ENCODE measurements at regions of chr6 and their contacts with region 1.

Region 1: DNA sequence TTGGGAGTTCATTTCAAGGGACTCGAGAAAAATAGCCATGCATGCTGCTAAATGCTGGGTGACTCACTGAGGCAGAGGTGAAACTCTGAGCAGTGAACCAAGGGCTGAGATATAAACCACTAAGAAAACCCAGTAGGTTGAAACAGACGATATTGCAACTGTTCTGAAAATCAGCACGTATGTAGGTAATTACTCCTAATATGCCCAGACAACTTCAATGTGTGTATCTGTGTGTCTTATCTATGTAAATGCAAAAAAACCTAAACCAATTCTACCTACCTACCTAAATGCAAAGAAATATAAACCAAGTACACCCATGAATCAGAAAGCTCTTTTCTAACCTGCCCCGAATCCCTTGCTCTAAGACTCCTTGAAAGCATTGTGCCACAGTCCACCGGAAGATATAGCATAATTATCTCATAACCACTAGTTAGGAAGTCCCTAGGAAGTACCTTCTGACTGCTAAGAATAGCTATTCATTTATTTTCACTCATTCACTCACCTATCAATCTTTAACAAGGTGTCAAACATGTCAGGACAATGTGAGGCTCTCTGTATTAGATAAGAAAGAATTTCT is 458.7 kb upstream of the RUNX2 start:
- DNase-seq: peak; percentile 86
- ATAC-seq: peak; percentile 86
- H3K4me3 ChIP-seq: peak overlapping the region; percentile 33
- H3K27ac ChIP-seq: peak overlapping the region; percentile 2
- H3K4me1 ChIP-seq: peaks cover 25% of the 10 kb centered on the region
- H3K27me3 ChIP-seq: no peaks in the 10 kb centered on the region
- CTCF ChIP-seq: no peak
- EP300 ChIP-seq: peak; percentile 46 to 85; a peak in 3 of 4 replicates
- POLR2A ChIP-seq: no peak
- RAD21 ChIP-seq: no peak

Region 2: DNA sequence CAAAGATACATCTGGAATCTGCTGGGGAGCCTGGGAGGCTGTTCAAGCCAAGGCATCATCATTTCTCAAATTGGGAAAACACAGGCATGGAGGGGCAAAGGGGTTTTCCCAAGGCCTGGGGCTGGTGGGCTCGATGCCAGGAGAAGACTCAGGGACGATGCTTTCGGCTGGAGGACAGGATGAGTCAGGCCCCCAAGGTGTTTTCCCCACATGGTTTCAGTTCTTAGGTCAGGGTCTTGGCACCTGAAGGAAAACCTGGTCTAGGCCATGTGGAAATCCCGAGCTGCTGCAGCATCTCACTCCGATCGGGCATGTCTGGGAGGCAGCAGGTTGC is 133.8 kb before region 1 on chr6:
- CTCF ChIA-PET with region 1: interaction called, 4 read pairs
- POLR2A ChIA-PET with region 1: no interaction called
- RAD21 ChIA-PET with region 1: interaction called, 4 read pairs
- SMC1A ChIA-PET with region 1: no interaction called
- in situ Hi-C with region 1: no loop called
- intact Hi-C with region 1: loop called (anchors 2 kb)
- DNase-seq: peak; percentile 68
- ATAC-seq: peak; percentile 71
- H3K4me3 ChIP-seq: no peak overlapping the region; the same call in 1 of the 2 replicates
- H3K27ac ChIP-seq: peak overlapping the region; percentile 64; the same call in 1 of the 2 replicates
- H3K4me1 ChIP-seq: peaks cover 42% of the 10 kb centered on the region
- H3K27me3 ChIP-seq: no peaks in the 10 kb centered on the region
- CTCF ChIP-seq: no peak
- EP300 ChIP-seq: peak in 1 of 2 experiments; percentile 32; a peak in 1 of 4 replicates
- POLR2A ChIP-seq: no peak
- RAD21 ChIP-seq: no peak

Region 3: GRCh38 chr6:44833248-44833647 is 36.2 kb before region 1 on chr6:
- CTCF ChIA-PET with region 1: interaction called, 6 read pairs
- POLR2A ChIA-PET with region 1: interaction called, 3 read pairs
- RAD21 ChIA-PET with region 1: interaction called, 14 read pairs
- SMC1A ChIA-PET with region 1: interaction called, 5 read pairs
- in situ Hi-C with region 1: no loop called
- intact Hi-C with region 1: loop called (anchors 2 kb)
- DNase-seq: peak; percentile 54
- ATAC-seq: peak; percentile 91
- H3K4me3 ChIP-seq: no peak overlapping the region
- H3K27ac ChIP-seq: no peak overlapping the region
- H3K4me1 ChIP-seq: peaks cover 9% of the 10 kb centered on the region
- H3K27me3 ChIP-seq: no peaks in the 10 kb centered on the region
- CTCF ChIP-seq: no peak
- EP300 ChIP-seq: peak in 1 of 2 experiments; percentile 18; a peak in 2 of 4 replicates
- POLR2A ChIP-seq: no peak
- RAD21 ChIP-seq: no peak

Region 4: DNA sequence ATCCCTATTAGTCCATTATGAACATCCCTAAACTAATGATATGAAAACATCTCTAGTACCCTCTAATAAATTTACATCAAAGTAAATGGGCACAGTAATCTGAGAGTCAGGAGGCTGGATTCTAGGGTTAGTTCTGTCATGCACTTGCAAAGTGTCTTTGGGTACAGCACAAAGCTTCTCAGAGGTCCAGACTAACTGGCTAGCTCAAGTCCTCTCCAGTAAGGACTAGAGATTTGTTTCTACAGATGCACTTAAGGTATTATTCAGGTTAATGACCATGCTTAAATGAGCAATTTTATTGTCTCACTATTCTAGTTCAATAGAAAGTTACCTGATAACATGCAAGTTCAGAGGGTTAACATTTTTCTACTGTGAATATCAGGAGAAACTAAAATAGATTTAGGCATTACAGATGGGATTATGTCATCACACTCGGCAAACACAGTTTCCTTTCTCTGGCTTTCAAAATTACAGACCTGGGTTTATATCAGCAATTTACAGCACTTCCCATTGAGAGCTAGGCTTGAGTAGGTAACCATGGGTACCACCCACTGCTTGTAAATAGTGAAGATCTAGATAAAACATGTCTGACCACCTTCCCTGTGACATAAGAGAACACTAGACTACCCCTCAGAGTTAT is 55.8 kb after region 1 on chr6:
- CTCF ChIA-PET with region 1: no interaction called
- POLR2A ChIA-PET with region 1: interaction called, 4 read pairs
- RAD21 ChIA-PET with region 1: interaction called, 9 read pairs
- SMC1A ChIA-PET with region 1: interaction called, 3 read pairs
- in situ Hi-C with region 1: no loop called
- intact Hi-C with region 1: loop called (anchors 5 kb)
- DNase-seq: peak; percentile 13
- ATAC-seq: peak; percentile 93
- H3K4me3 ChIP-seq: no peak overlapping the region
- H3K27ac ChIP-seq: no peak overlapping the region
- H3K4me1 ChIP-seq: no peaks in the 10 kb centered on the region
- H3K27me3 ChIP-seq: no peaks in the 10 kb centered on the region
- CTCF ChIP-seq: no peak
- EP300 ChIP-seq: no peak
- POLR2A ChIP-seq: no peak
- RAD21 ChIP-seq: no peak

Region 5: DNA sequence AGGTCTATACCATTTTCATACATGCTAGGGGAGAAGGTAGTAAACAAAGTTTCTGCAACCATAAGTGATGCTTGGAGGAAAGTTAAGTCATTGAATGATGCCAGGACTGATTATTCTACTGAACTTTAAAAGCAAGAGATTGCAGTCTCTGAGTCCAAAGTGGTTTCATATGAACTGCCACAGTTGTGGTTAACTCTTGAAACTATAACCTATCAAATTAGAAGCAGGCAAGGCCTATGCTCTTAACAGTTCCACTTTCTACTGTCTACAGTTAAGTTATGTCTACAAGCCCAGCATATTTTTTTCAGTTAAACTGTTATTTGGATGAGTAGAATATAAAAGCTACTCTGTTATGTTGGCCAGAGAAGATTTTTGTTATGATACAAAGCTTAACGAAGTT is 132.3 kb after region 1 on chr6:
- CTCF ChIA-PET with region 1: interaction called, 3 read pairs
- POLR2A ChIA-PET with region 1: no interaction called
- RAD21 ChIA-PET with region 1: interaction called, 30 read pairs
- SMC1A ChIA-PET with region 1: interaction called, 6 read pairs
- in situ Hi-C with region 1: no loop called
- intact Hi-C with region 1: no loop called
- DNase-seq: peak; percentile 52
- ATAC-seq: peak; percentile 100
- H3K4me3 ChIP-seq: no peak overlapping the region
- H3K27ac ChIP-seq: no peak overlapping the region
- H3K4me1 ChIP-seq: peaks cover 12% of the 10 kb centered on the region; the same call in 1 of the 2 replicates
- H3K27me3 ChIP-seq: no peaks in the 10 kb centered on the region
- CTCF ChIP-seq: no peak
- EP300 ChIP-seq: no peak
- POLR2A ChIP-seq: no peak
- RAD21 ChIP-seq: no peak

Region 6: GRCh38 chr6:45677381-45678284 is 808.2 kb after region 1 on chr6:
- CTCF ChIA-PET with region 1: no interaction called
- POLR2A ChIA-PET with region 1: no interaction called
- RAD21 ChIA-PET with region 1: no interaction called
- SMC1A ChIA-PET with region 1: no interaction called
- in situ Hi-C with region 1: no loop called
- intact Hi-C with region 1: loop called (anchors 5 kb)
- DNase-seq: peak; percentile 30
- ATAC-seq: peak; percentile 79
- H3K4me3 ChIP-seq: peak overlapping the region; percentile 9; the same call in 1 of the 2 replicates
- H3K27ac ChIP-seq: no peak overlapping the region
- H3K4me1 ChIP-seq: peaks cover 19% of the 10 kb centered on the region
- H3K27me3 ChIP-seq: no peaks in the 10 kb centered on the region; a peak in 2 of 4 replicates
- CTCF ChIP-seq: no peak
- EP300 ChIP-seq: peak; percentile 25 to 40; a peak in 1 of 4 replicates
- POLR2A ChIP-seq: no peak
- RAD21 ChIP-seq: no peak

Measured in GM12878 (cell line).